T-cell (primary cell): ENCODE measurements at regions of chr9 and their contacts with region 1.

Region 1: DNA sequence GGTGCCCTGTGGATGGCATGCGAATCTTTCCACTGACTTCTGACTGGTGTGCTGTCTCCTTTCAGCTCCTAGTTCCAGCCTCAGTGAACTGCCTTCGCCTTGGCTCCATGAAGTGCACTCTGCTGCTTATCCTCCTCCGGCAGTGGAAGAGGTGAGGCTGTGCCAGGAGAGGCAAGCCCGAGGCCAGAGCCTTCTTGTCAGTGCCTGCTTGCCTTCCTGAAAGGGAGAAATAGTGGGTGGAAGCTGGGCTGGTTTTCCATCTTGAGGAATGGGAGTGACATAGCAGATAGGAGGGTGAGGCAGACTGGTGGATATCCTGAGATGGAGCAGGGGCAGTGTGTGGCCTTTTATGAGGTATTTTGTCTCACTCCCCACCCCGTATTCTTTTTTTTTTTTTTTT is 29.7 kb downstream of the SH3GLB2 start:
- DNase-seq: no peak
- ATAC-seq: no peak
- H3K4me3 ChIP-seq: no peak overlapping the region
- H3K4me3 Mint-ChIP-seq: no peak overlapping the region
- H3K27ac ChIP-seq: no peak overlapping the region
- H3K27ac Mint-ChIP-seq: no peak overlapping the region
- H3K4me1 ChIP-seq: peaks cover 0 to 4% of the 10 kb centered on the region in 2 experiments
- H3K4me1 Mint-ChIP-seq: peaks cover 13 to 16% (median 13%) of the 10 kb centered on the region in 3 donors
- H3K27me3 ChIP-seq: no peaks in the 10 kb centered on the region
- H3K27me3 Mint-ChIP-seq: no peaks in the 10 kb centered on the region

Region 2: DNA sequence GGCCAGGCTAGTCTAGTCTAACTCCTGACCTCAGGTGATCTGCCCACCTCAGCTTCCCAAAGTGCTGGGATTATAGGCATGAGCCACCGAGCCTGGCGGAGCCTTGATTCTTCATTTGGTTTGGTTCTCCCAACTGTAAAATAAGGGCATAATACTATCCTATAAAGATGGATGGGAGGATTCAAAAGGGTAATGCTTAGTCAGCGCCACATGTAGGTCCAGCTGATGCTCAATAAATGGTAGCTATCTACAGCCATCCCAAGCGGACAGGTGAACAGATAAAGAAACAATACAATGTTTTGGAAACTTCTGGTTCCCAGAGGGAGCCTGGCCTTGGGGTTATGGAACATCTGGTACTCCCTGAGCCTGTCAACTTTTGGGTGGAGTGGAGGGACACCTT is 323.1 kb before region 1 on chr9:
- CTCF ChIA-PET with region 1: no interaction called
- POLR2A ChIA-PET with region 1: interaction called in 1 of 2 experiments, 10 read pairs
- DNase-seq: no peak
- ATAC-seq: no peak
- H3K4me3 ChIP-seq: no peak overlapping the region
- H3K4me3 Mint-ChIP-seq: no peak overlapping the region
- H3K27ac ChIP-seq: no peak overlapping the region
- H3K27ac Mint-ChIP-seq: no peak overlapping the region
- H3K4me1 ChIP-seq: no peaks in the 10 kb centered on the region
- H3K4me1 Mint-ChIP-seq: peaks cover 0 to 3% (median 0%) of the 10 kb centered on the region in 3 donors
- H3K27me3 ChIP-seq: no peaks in the 10 kb centered on the region
- H3K27me3 Mint-ChIP-seq: no peaks in the 10 kb centered on the region